ENCODE measurements at regions of chr12 and their contacts with region 1.

Region 1: GRCh38 chr12:100348657-100349454 is 8.0 kb upstream of the SLC17A8 start:
- H3K4me3 ChIP-seq: no peak overlapping the region
- H3K27ac ChIP-seq: no peak overlapping the region
- H3K4me1 ChIP-seq: no peaks in the 10 kb centered on the region
- CTCF ChIP-seq: peak; percentile 24; the same call in 1 of the 2 replicates

Region 2: DNA sequence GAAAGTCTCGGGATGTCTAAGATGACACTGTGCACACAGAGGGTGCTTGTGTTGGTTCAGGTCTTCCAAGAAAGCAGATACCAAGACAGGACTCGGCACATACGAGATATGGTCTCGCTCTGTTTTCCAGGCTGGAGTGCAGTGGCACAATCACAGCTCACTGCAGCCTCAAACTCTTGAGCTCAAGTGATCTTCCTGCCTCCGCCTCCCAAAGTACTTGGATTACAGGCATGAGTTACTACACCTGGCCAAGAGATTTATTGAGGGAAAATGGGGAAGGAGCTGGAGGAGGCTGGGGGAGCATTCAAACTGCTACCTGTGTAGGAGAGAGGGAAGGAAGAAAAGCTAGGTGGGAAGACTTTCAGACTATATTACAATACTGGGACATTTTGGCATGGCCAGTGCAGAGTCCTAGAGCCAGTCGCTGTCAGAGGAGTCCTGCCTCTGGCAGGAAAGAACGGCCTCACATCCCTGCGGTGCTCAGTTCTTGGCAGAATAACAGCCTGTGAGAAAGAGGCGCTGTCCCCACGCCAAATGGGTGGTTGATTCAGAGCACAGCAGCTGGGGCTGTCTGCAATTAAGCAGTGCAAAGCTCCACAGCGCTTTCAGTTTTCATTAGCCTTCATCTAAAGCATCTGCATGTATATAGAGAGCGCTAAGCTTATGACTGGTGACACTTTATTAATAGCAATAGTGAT is 26.3 kb after region 1 on chr12:
- CTCF ChIA-PET with region 1: no interaction called
- POLR2A ChIA-PET with region 1: no interaction called
- H3K4me3 ChIP-seq: no peak overlapping the region
- H3K27ac ChIP-seq: no peak overlapping the region
- H3K4me1 ChIP-seq: no peaks in the 10 kb centered on the region
- CTCF ChIP-seq: no peak

Region 3: DNA sequence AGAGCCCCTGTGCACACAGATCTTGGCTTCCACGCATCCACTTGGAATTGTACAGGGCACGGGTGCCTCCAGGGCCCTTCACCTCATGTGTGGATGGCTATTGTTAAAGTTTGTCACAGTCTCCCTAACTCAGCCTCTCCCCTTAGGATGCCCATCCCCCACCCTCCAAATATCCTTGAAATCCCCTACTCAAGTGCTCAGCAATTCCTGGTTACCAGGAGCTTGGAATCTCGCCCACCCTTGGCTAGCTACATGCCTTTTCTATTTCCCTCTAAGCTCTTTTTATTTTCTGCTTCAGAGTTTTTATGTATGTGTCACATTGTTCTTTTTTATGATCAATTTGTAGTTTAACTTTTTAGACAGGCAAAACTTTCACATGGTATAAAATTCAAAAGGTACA is 111.8 kb after region 1 on chr12:
- CTCF ChIA-PET with region 1: interaction called, 10 read pairs
- POLR2A ChIA-PET with region 1: no interaction called
- H3K4me3 ChIP-seq: no peak overlapping the region
- H3K27ac ChIP-seq: no peak overlapping the region
- H3K4me1 ChIP-seq: peaks cover 8% of the 10 kb centered on the region; the same call in 1 of the 2 replicates
- CTCF ChIP-seq: no peak

Region 4: DNA sequence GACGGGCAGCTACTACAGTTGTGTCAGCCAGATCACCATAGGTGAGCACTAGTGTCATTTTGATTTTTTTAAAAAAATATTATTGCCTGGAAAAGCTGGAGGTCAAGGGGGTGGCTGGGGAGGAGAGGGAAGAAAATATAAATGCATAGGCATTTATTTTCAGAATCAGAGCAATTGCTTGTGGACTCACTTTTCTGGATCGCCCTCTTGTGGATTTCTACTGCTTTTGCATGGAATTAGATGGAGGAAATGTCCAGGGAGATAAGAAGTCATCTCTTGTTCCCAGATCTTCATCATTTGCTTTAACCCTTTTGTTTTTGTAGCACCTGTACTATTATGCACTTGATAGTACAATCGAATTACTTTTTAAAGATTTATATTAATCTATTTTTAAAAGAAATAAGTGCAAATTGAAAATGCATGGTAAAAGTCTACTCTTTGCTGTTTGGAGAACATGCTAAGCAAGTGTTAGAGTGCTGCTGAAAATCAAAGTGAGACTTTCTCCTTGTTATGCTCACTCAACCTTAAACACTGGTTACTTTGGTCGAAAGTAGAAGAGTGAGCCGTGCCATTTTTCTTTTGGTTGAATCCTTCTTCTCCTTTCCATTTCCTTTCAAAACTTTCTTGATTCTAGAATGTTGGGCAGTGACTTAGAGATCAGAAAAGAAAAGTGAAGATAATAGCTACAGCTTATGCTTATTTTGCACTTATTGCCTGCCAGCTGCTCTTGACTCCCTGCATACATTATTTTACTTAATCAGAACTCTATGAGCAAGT is 385.1 kb after region 1 on chr12:
- CTCF ChIA-PET with region 1: interaction called, 10 read pairs
- POLR2A ChIA-PET with region 1: no interaction called
- H3K4me3 ChIP-seq: no peak overlapping the region
- H3K27ac ChIP-seq: no peak overlapping the region
- H3K4me1 ChIP-seq: no peaks in the 10 kb centered on the region
- CTCF ChIP-seq: peak; percentile 21; the same call in 1 of the 2 replicates